ENCODE measurements at regions of chr18 and their contacts with region 1.

Region 1: GRCh38 chr18:10892786-10893185 is 256.6 kb downstream of the PIEZO2 start:
- DNase-seq: no peak
- ATAC-seq: no peak

Region 2: GRCh38 chr18:11005528-11005927 is 112.7 kb after region 1 on chr18:
- intact Hi-C with region 1: loop called in 1 of 2 experiments (anchors 10 kb)
- DNase-seq: no peak
- ATAC-seq: peak in 1 of 2 donors; percentile 79

Region 3: GRCh38 chr18:11125492-11126315 is 232.9 kb after region 1 on chr18:
- intact Hi-C with region 1: no loop called
- DNase-seq: no peak
- ATAC-seq: peak; percentile 65 to 71